ENCODE measurements at regions of chr9 and their contacts with region 1.

Region 1: GRCh38 chr9:21802195-21803000 is at the start of gene MTAP:
- DNase-seq: peak; percentile 93 to 98 (median 96)
- H3K4me3 ChIP-seq: peak within 1 kb of the TSS; percentile 41 to 85 (median 82)
- H3K27ac ChIP-seq: peak within 1 kb of the TSS; percentile 50 to 94 (median 78)
- H3K4me1 ChIP-seq: peaks cover 5 to 25% of the 10 kb centered on the region in 2 donors
- H3K27me3 ChIP-seq: no peaks in the 10 kb centered on the region
- CTCF ChIP-seq: no peak
- POLR2A ChIP-seq: peak; percentile 88 to 91
- total RNA-seq, gene MTAP: 10.4 to 38.2 (median 24.8) TPM

Region 2: DNA sequence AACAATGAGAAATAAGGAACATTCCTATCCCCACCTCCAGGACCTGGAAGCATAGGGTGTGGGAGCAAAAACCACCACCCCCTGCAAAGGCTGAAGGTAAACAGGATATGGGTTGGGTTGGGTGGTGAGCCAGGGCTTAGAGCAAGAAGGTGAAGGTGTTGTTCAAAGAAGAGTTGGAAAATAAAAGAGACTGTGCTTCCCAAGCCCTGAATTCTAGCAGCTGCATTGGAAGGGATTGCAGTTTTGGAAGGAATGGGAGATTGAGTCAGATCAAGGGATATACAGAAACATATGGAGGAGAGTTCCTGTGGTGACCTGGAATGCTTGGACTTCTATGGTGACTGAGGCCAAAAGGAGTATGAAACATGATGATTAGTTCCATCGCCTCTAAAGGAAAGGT is 24.7 kb before region 1 on chr9:
- intact Hi-C with region 1: no loop called
- DNase-seq: no peak
- H3K4me3 ChIP-seq: no peak overlapping the region
- H3K27ac ChIP-seq: no peak overlapping the region
- H3K4me1 ChIP-seq: no peaks in the 10 kb centered on the region
- H3K27me3 ChIP-seq: peaks cover 5% of the 10 kb centered on the region
- CTCF ChIP-seq: no peak
- POLR2A ChIP-seq: no peak

Region 3: DNA sequence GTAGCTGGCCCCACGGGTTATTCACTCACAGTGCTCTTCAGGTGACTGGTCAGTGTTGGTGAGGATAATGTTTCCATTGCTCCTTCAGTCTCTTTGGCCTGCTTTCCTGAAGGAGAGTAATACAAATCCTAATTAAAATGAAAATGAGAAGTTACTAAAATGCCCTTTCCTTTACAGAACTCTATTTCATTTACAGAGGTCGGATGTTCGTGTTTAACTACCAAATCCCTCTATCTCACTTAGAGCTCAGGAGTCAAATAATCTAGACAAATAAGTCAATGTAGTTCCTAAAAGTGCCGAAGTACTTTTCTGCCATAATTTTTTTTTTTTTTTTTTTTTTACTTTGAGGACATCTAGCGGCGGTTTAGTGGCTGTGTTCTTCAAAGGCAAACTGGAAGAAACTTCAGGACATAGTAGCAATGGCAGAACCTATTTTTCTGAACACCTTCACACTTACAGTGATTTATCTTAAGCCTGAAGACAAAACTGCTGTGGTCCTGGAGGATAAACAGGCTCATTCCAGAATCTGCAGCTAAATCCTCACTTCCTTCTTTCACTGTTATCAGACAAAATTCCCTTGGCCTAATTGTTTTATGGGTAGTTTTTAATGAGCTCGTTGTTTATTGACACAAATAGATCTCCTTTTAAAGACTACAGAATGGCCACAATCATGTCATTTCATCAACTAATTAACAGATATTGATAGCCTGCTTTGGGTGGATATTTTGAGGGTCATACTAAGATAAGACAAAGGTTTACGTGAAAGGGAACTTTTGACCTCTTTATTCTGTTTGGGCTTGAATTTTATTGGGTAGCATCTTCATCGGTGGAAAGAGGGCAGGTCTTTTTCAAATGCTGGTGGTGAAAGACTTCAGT is 436.6 kb after region 1 on chr9:
- intact Hi-C with region 1: loop called in 1 of 2 experiments (anchors 10 kb)
- DNase-seq: peak in 1 of 7 donors; percentile 8
- H3K4me3 ChIP-seq: no peak overlapping the region
- H3K27ac ChIP-seq: no peak overlapping the region
- H3K4me1 ChIP-seq: peaks cover 0 to 7% of the 10 kb centered on the region in 2 donors
- H3K27me3 ChIP-seq: no peaks in the 10 kb centered on the region
- CTCF ChIP-seq: peak in 4 of 6 experiments; percentile 28 to 56 (median 44)
- POLR2A ChIP-seq: no peak